PC-3 (cell line): ENCODE measurements at regions of chr12 and their contacts with region 1.

Region 1: DNA sequence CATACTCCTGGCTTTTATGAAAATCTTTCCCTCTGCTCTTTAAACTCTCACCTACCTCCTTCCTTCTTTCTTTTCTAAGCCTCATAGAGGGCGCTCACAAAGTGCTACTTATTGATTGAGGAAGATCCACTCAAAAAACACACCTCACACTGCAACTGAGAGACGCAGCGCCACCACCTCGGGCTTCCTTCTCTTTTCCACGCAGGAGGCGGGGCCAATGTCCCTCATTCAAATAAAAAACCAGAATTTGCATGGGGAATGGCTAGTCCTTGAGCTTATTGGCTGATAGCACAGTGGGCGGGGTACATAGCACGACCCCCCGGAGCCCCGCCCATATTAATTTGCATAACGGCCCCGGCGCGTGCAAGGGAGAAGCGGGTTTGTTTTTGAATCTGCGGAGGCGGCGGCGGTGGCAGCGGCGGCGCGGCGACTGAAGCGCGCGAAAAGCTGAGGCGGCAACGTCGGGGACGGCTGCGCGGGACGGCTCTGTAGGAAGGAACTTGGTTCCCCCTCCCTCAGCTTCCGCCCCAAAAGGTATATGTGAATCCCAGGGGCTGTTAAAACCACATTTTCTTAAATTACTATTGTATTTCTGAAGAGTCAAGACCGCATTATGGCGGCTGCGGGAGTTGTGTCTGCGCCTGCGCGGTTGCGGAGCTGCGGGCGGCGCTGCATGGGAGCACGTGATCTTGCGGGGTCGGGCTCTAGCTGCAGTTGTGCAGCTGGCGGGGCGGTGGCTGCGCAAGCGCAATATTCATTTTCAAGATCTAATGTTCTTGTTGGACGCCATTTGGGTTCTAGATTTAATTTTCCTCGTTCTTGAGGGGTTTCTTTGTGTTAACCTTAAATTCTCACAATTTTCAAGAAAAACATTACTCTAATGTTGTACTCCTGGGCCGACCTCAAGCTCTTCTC is at the start of gene ATF7IP:
- DNase-seq: peak; percentile 94
- ATAC-seq: peak; percentile 93
- H3K4me3 ChIP-seq: peak within 1 kb of the TSS; percentile 83
- H3K27ac ChIP-seq: peak within 1 kb of the TSS; percentile 98
- H3K4me1 ChIP-seq: peaks cover 3% of the 10 kb centered on the region; the same call in 1 of the 2 replicates
- H3K27me3 ChIP-seq: no peaks in the 10 kb centered on the region
- CTCF ChIP-seq: peak; percentile 55
- total RNA-seq, gene ATF7IP: 12.5 and 16.9 TPM in 2 replicates

Region 2: DNA sequence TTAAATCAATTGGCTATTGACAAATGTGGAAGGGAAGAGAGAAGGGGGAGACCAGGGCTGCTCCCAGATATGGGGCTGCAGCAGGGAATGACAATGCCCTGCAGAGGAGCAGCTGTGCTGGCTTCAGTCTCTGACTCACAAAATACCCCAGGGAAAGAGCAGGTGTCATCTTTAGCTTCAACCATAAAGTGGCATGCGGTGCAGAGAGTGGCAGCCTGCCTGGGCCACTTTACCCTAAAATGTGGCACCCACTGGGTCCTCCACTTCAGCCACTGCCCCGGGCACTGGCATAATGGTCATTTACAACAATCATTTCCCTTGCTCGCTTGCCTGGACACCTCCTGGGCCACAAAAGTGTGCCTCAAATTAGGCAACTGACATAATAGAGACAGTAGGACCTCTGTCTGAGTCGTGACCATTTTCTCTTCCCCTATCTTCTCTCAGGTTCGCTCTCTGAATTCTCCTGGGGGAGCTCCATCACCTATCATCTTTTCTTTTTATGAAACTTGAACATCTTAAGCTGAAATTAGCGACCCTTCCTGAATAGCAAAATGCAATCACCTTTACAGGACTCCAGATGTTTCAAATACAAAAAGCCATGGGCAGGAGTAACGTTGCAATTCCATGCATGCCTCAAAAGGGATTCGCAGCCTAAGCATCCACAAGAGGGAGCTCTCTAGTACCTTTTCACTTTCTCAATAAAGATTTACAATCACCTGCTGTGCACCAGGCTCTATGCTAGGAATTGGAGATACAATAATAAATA is 179.9 kb before region 1 on chr12:
- CTCF ChIA-PET with region 1: no interaction called
- POLR2A ChIA-PET with region 1: no interaction called
- intact Hi-C with region 1: loop called (anchors 5 kb)
- DNase-seq: peak; percentile 63
- ATAC-seq: peak; percentile 76
- H3K4me3 ChIP-seq: no peak overlapping the region
- H3K27ac ChIP-seq: no peak overlapping the region
- H3K4me1 ChIP-seq: no peaks in the 10 kb centered on the region
- H3K27me3 ChIP-seq: no peaks in the 10 kb centered on the region
- CTCF ChIP-seq: peak; percentile 74

Region 3: DNA sequence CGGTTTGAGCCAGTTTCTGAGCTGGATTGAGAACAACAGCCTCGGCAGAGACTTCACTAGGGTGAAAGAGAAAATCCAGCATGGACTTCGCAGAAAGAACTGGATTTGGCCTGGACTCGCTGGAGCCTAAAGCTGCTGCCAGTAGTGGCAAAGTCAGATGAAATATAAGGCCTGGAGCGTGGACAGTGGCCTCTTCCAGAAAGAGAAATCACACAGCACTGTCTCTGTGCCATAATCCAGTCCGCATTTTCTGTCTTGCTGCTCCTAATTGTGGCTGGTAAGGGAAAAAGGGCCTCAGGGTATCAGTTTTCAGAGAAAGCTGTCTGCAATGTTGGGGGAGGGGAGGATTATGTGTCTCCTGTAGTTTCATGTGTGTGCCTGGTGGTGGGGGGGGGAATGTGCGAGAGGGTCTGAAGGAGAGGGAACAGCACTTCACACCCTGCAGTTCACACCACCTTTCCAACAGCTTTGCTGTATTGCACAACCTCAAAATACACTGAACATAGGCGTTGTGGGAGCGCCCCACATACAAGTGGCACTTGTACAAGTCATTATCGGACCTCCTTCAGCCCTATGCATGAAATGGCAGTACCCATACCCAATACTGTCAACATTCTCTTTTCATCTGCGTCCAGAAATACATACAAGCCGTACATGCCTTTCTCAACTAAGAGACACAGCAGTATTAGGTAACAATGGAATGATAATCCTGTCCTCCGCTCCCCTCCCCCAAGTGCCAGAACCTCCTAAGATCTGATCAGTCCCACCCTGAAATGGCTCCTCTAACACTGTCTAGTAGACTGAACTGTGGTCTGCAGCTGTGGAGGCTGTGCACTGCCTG is 107.6 kb before region 1 on chr12:
- CTCF ChIA-PET with region 1: interaction called, 8 read pairs
- POLR2A ChIA-PET with region 1: interaction called, 6 read pairs
- intact Hi-C with region 1: loop called (anchors 1 kb)
- DNase-seq: peak; percentile 97
- ATAC-seq: peak; percentile 69
- H3K4me3 ChIP-seq: no peak overlapping the region
- H3K27ac ChIP-seq: peak overlapping the region; percentile 94
- H3K4me1 ChIP-seq: peaks cover 52% of the 10 kb centered on the region
- H3K27me3 ChIP-seq: no peaks in the 10 kb centered on the region
- CTCF ChIP-seq: no peak

Region 4: DNA sequence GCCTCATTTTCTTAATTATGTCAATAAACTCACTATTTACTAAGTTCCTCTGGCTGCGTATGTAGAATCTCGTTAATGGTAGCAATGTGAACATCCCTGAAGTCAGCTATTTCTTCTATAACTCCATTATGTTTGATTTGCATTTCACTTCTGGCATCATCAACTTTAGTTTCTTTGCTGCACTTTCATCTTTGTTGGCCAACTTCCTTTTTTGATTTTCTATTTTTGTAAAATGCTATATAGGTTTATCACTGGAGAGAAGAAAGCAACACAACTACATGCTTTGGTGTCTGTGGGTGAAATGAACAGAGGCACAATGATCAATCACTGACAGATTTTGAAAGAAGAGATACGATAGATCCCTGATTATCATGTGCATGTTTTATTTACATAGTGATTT is 58.5 kb before region 1 on chr12:
- CTCF ChIA-PET with region 1: no interaction called
- POLR2A ChIA-PET with region 1: interaction called, 11 read pairs
- intact Hi-C with region 1: no loop called
- DNase-seq: no peak
- ATAC-seq: no peak
- H3K4me3 ChIP-seq: no peak overlapping the region
- H3K27ac ChIP-seq: no peak overlapping the region
- H3K4me1 ChIP-seq: no peaks in the 10 kb centered on the region
- H3K27me3 ChIP-seq: no peaks in the 10 kb centered on the region
- CTCF ChIP-seq: no peak

Region 5: DNA sequence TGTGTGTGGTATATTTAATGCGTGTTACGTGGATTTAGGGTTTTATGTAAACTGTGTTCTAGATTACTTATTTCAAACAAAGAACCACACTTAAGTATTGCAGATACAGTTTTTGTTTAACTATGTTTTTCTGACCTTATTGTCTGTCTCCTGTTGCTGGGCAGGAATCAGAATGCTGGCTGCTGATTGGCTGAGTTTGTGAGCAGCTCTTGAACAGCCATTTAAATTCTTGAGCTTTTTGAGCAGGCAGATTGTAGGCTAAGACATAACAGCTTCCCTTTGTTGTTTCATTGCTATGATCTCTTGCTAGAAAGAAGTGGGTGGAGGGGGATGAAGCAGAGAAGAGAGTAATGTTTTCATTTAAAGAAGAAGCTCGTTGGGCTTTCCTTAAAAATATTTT is 52.2 kb after region 1 on chr12:
- CTCF ChIA-PET with region 1: interaction called, 5 read pairs
- POLR2A ChIA-PET with region 1: interaction called, 4 read pairs
- intact Hi-C with region 1: loop called (anchors 1 kb)
- DNase-seq: peak; percentile 54
- ATAC-seq: peak; percentile 50; the same call in 1 of the 2 replicates
- H3K4me3 ChIP-seq: no peak overlapping the region
- H3K27ac ChIP-seq: no peak overlapping the region
- H3K4me1 ChIP-seq: peaks cover 11% of the 10 kb centered on the region; the same call in 1 of the 2 replicates
- H3K27me3 ChIP-seq: no peaks in the 10 kb centered on the region
- CTCF ChIP-seq: no peak